Activated CD4-positive, alpha-beta memory T cell treated with anti-CD3 and anti-CD28 coated beads, Interleukin-2, amount 10 ng/mL, durations not matched to agents 7 days and 5 days (primary cell): ENCODE measurements at regions of chr11 and their contacts with region 1.

Region 1: DNA sequence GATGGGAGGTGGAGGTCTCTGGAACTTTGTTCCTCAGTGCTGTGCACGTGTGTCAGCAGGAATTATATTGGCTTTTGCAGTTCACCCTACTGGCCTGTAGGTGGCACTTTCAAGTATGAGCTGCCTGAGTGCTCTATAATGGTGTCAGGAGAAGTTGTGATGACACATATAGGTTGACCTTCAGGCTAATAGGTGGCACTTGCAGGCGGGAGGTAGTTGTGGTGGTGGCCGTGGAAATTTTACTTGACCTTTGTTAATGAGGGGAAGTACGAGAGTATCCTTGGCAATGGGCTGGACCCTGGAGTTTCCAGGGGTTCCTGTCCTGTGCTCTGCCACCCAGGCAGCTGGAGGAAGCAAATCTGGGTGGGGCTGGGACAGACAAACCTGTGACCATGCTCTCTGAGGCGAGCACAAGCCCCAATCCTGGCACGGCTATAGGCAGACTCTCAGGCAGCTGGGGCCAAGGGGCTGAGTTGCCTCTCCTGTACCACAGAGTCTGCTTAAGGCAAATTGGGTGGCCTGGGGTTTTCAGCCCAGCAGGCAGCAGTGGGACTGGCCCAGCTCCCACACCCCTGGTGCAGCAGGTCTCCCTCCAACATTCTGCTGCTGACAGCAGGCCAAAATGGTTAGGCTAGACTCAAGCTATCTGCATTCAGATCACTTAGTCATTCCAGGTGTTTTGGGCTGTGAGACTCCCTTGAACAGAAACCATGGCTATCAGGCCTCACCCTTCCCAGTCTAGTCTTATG is 147.5 kb upstream of the CTSC start:
- DNase-seq: peak; percentile 41
- H3K4me3 Mint-ChIP-seq: no peak overlapping the region
- H3K27ac Mint-ChIP-seq: no peak overlapping the region
- H3K4me1 Mint-ChIP-seq: peaks cover 9% of the 10 kb centered on the region
- H3K27me3 Mint-ChIP-seq: peaks cover 2% of the 10 kb centered on the region

Region 2: DNA sequence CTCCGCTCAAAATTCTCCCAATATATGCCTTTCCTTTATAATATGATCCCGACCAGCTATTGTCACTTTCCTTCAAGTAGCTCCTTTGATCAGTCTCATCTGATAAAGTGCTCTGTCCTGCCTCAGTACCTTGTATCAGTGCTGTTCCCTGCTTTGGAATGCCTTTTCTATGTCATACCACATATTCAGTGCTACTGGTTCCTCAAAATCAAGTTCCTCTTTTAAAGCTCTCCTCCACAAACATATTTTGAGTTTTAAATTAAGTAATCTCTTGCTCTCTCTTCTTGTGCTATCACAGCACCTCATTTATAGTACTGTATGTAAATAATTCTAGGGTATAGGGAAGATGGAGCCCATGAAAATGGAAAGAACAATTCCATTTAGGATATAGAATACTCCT is 10.4 kb before region 1 on chr11:
- CTCF ChIA-PET with region 1: interaction called, 11 read pairs
- POLR2A ChIA-PET with region 1: no interaction called
- DNase-seq: no peak
- H3K4me3 Mint-ChIP-seq: no peak overlapping the region
- H3K27ac Mint-ChIP-seq: no peak overlapping the region
- H3K4me1 Mint-ChIP-seq: no peaks in the 10 kb centered on the region
- H3K27me3 Mint-ChIP-seq: peaks cover 7% of the 10 kb centered on the region